OCI-LY7 (cell line): ENCODE measurements at regions of chr14 and their contacts with region 1.

Region 1: DNA sequence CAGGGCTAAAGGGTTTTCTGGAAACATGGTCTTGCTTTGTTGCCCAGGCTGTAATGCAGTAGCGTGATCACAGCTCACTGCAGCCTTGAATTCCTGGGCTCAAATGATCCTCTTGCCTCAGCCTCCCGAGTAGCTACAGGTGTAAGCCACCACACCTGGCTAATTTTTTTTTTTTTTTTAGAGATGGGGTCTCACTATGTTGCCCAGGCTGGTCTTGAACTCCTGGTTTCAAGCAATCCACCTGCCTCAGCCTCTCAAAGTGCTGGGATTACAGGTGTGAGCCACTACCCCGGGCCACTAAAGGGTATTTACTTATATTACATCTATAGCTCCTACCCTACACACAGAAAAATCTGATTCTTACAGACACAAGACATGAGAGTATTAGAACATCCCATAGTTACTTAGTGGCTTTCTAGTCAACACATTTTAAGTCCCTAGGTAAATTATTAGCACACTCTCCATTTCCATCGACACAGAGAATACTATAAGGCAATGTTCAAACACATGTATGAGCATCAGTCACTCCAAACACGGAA is 6.2 kb upstream of the DCAF11 start:
- DNase-seq: no peak
- H3K4me3 ChIP-seq: no peak overlapping the region
- H3K27ac ChIP-seq: peak overlapping the region; percentile 55
- H3K4me1 ChIP-seq: peaks cover 15% of the 10 kb centered on the region
- CTCF ChIP-seq: no peak

Region 2: DNA sequence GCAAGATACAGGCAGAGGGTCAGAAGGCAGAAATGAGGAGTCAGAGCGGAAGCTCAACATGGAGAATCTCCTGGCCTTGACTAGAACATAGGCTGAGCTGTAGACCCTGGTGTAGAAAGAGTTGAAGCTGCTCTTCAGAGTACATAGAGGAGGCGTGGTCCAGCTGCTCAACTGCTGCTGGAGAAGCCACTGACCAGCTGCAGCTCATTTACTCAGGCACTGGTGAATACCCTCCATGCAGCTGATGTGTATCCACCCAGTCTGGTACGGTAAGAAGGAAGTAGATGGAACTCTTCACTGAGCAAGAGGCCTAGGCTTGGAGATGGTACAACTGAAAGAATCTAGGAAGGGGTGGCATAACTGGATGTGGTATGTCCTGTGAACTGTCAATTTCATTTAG is 303.6 kb before region 1 on chr14:
- CTCF ChIA-PET with region 1: no interaction called
- POLR2A ChIA-PET with region 1: no interaction called
- intact Hi-C with region 1: no loop called
- DNase-seq: no peak
- H3K4me3 ChIP-seq: no peak overlapping the region
- H3K27ac ChIP-seq: no peak overlapping the region
- H3K4me1 ChIP-seq: no peaks in the 10 kb centered on the region
- CTCF ChIP-seq: no peak

Region 3: DNA sequence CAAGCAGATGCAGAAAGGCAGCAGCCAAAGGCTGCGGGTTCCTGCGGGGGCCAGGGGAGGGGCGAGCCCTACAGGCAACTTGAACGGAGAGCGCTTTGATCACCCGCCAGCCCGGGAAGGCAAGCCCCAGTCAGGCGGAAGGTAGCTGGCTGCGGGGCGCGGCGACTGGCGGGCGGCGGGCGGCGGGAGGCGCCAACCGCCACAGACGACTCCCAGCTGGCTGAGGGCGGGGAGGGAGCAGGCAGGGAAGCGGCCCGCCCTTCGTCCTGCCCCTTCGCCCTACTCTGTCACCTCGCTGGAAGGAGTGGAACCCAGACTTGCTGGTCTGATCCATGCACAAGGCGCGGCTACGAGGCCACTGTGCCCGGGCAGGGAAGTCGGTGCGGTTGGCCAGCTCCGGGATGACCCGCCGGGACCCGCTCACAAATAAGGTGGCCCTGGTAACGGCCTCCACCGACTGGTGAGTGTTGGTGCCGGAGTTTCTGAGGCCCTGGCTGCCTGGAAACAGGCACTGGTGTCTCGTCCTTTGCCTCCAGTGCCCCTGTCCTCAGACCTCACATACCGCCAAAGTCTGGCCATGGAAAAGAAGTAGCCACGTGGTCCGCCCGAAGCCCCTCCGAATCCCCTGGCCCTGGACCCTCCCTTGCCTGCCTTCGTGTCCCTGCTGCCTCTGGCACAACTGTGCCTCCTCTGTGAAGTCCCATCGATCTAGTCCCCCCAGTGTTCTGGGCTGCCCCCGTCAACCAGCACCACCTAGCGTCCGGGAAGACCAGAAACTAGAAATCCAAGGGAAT is 72.0 kb before region 1 on chr14:
- CTCF ChIA-PET with region 1: no interaction called
- POLR2A ChIA-PET with region 1: no interaction called
- intact Hi-C with region 1: no loop called
- DNase-seq: peak; percentile 54
- H3K4me3 ChIP-seq: peak overlapping the region; percentile 40
- H3K27ac ChIP-seq: no peak overlapping the region
- H3K4me1 ChIP-seq: peaks cover 4% of the 10 kb centered on the region
- CTCF ChIP-seq: peak; percentile 85

Region 4: GRCh38 chr14:24058260-24058950 is 50.0 kb before region 1 on chr14:
- CTCF ChIA-PET with region 1: no interaction called
- POLR2A ChIA-PET with region 1: no interaction called
- intact Hi-C with region 1: loop called (anchors 2 kb)
- DNase-seq: peak; percentile 41
- H3K4me3 ChIP-seq: no peak overlapping the region
- H3K27ac ChIP-seq: no peak overlapping the region
- H3K4me1 ChIP-seq: no peaks in the 10 kb centered on the region
- CTCF ChIP-seq: peak; percentile 61

Region 5: GRCh38 chr14:24542346-24542936 is 434.0 kb after region 1 on chr14:
- CTCF ChIA-PET with region 1: no interaction called
- POLR2A ChIA-PET with region 1: no interaction called
- intact Hi-C with region 1: no loop called
- DNase-seq: no peak
- H3K4me3 ChIP-seq: no peak overlapping the region
- H3K27ac ChIP-seq: no peak overlapping the region
- H3K4me1 ChIP-seq: no peaks in the 10 kb centered on the region
- CTCF ChIP-seq: no peak

Region 6: DNA sequence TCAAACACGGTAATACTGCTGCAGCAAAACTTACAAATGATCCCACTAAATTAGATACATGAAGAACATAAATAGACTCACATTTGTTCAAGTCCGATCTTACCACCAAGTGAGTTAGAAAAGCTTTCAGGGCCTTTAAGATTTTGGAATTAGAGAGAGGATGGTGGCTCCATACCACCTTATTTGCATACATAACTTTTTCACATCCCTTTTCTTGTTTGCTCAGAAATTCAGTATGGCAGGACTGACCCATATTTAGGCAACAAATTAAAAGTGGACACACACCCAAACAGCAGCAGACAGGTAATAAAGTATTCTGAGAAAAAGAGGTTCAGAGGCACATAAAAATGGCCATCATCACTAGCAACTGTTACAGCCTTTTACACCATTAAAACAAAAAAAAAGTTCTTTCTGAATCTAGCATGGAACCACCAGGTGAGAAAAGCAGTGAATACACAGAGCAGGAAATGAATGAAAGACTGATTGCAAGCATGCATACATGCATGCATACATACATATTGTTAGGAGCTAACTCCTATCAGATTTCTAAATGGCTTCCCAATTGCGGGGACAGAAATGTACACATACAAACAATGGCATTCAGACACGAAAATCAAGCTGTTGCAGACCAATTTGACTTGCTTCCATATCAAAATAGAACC is 918.2 kb after region 1 on chr14:
- CTCF ChIA-PET with region 1: no interaction called
- POLR2A ChIA-PET with region 1: no interaction called
- intact Hi-C with region 1: no loop called
- DNase-seq: no peak
- H3K4me3 ChIP-seq: no peak overlapping the region
- H3K27ac ChIP-seq: no peak overlapping the region
- H3K4me1 ChIP-seq: no peaks in the 10 kb centered on the region
- CTCF ChIP-seq: no peak